ENCODE measurements at regions of chr11 and their contacts with region 1.

Region 1: GRCh38 chr11:20127671-20128527 is 32.4 kb downstream of the DBX1 start:
- DNase-seq: peak; percentile 52
- ATAC-seq: peak; percentile 90
- H3K4me3 ChIP-seq: no peak overlapping the region
- H3K27ac ChIP-seq: no peak overlapping the region
- H3K4me1 ChIP-seq: peaks cover 16% of the 10 kb centered on the region; the same call in 1 of the 2 replicates
- H3K27me3 ChIP-seq: peaks cover 0 to 19% of the 10 kb centered on the region in 2 experiments; a peak in 2 of 5 replicates
- CTCF ChIP-seq: peak; percentile 92
- EP300 ChIP-seq: no peak
- POLR2A ChIP-seq: no peak
- RAD21 ChIP-seq: peak; percentile 66

Region 2: DNA sequence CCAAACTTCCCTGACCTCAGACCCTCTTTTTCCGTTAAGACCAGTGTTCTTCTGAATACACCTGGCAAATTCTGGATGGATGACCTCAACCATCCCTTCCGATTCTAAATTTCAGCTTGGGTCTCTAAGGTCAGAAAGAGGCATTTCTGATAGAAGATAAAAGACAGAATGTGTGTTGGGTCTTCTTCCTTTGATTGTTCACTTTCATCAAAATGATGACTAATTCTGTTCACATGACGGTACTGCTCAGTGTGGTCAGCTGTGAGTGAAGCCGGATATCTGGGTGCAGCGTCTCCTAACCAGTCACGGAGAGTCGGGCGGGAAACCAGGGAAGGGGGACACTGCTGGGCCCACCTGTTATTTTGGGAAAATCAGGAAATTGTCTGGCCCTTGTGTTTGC is 566.9 kb before region 1 on chr11:
- CTCF ChIA-PET with region 1: interaction called, 5 read pairs
- POLR2A ChIA-PET with region 1: no interaction called
- in situ Hi-C with region 1: loop called (anchors 5 kb)
- intact Hi-C with region 1: loop called (anchors 5 kb)
- DNase-seq: no peak
- ATAC-seq: no peak
- H3K4me3 ChIP-seq: no peak overlapping the region
- H3K27ac ChIP-seq: no peak overlapping the region
- H3K4me1 ChIP-seq: no peaks in the 10 kb centered on the region
- H3K27me3 ChIP-seq: peaks cover 0 to 28% of the 10 kb centered on the region in 2 experiments; a peak in 3 of 5 replicates
- CTCF ChIP-seq: no peak
- EP300 ChIP-seq: no peak
- POLR2A ChIP-seq: no peak
- RAD21 ChIP-seq: no peak

Region 3: GRCh38 chr11:20080032-20080685 is 47.7 kb before region 1 on chr11:
- CTCF ChIA-PET with region 1: no interaction called
- POLR2A ChIA-PET with region 1: no interaction called
- in situ Hi-C with region 1: no loop called
- intact Hi-C with region 1: no loop called
- DNase-seq: no peak
- ATAC-seq: no peak
- H3K4me3 ChIP-seq: no peak overlapping the region
- H3K27ac ChIP-seq: no peak overlapping the region
- H3K4me1 ChIP-seq: peaks cover 19% of the 10 kb centered on the region
- H3K27me3 ChIP-seq: no peaks in the 10 kb centered on the region
- CTCF ChIP-seq: no peak
- EP300 ChIP-seq: no peak
- POLR2A ChIP-seq: no peak
- RAD21 ChIP-seq: no peak

Region 4: DNA sequence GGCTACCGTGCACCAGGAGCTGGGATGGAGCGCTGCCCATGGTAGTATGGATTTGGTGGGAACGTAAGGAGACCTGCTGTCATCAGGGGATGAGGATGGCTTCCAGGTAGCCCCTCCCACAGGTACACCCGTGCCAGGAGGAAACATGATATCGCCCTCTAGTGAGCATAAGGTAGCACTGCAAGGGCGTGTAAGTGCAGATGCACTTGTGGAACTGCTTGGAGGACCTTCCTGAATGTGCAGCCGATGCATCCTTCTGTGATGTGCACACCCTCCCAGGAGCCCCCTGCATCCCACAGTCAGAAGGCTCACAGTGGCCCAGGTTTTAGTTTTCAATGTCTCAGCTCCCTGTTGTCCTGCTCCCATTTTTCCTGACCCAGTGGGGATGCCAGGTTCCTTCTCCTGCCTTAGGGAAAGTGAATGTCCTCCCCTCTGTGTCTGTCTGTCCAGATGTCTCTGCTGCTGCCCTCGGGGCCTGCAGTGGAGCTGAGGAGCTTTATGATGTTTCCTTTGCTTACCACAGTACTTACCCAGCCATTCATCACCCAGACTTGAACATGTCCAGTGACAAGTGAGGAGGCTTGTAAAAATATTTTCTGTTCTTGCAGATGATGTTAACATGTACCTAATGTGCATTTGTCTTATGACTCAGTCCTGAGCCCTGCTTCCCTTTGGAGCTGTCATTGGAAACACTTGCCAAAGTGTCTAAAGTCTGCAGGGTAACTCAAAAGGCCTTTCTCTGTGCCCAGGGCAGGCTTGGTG is 16.8 kb before region 1 on chr11:
- CTCF ChIA-PET with region 1: no interaction called
- POLR2A ChIA-PET with region 1: no interaction called
- in situ Hi-C with region 1: no loop called
- intact Hi-C with region 1: no loop called
- DNase-seq: peak; percentile 70
- ATAC-seq: peak; percentile 85
- H3K4me3 ChIP-seq: no peak overlapping the region
- H3K27ac ChIP-seq: no peak overlapping the region
- H3K4me1 ChIP-seq: no peaks in the 10 kb centered on the region
- H3K27me3 ChIP-seq: no peaks in the 10 kb centered on the region
- CTCF ChIP-seq: peak; percentile 95
- EP300 ChIP-seq: no peak
- POLR2A ChIP-seq: no peak; a peak in 1 of 4 replicates
- RAD21 ChIP-seq: peak; percentile 45; the same call in 1 of the 2 replicates

Region 5: GRCh38 chr11:20337526-20338154 is 209.7 kb after region 1 on chr11:
- CTCF ChIA-PET with region 1: no interaction called
- POLR2A ChIA-PET with region 1: no interaction called
- in situ Hi-C with region 1: no loop called
- intact Hi-C with region 1: loop called (anchors 1 kb)
- DNase-seq: peak; percentile 18
- ATAC-seq: peak; percentile 87
- H3K4me3 ChIP-seq: no peak overlapping the region
- H3K27ac ChIP-seq: no peak overlapping the region
- H3K4me1 ChIP-seq: peaks cover 6% of the 10 kb centered on the region; the same call in 1 of the 2 replicates
- H3K27me3 ChIP-seq: no peaks in the 10 kb centered on the region; a peak in 2 of 5 replicates
- CTCF ChIP-seq: peak; percentile 52
- EP300 ChIP-seq: no peak
- POLR2A ChIP-seq: no peak
- RAD21 ChIP-seq: peak; percentile 28; the same call in 1 of the 2 replicates

Region 6: DNA sequence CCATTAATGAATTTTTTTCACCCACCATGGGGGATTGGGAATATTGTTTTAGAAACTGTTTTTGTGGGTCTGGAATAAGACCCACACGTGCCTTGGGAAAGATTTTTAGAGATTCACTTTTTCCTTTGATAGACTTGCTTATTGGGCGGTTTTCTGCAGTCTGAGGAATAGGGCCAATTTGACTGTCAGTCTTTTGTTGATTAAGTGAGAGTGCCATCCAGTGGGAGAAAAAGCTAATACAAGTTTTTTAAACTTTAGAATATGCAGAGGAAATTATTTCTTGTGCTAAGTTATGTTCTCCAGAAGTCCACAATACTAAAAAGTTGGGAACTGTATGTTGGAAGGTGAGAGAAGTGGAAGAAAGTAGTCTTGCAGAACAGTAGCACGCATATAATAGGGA is 315.7 kb after region 1 on chr11:
- CTCF ChIA-PET with region 1: no interaction called
- POLR2A ChIA-PET with region 1: no interaction called
- in situ Hi-C with region 1: no loop called
- intact Hi-C with region 1: loop called (anchors 10 kb)
- DNase-seq: peak; percentile 5
- ATAC-seq: no peak
- H3K4me3 ChIP-seq: no peak overlapping the region
- H3K27ac ChIP-seq: no peak overlapping the region
- H3K4me1 ChIP-seq: peaks cover 9% of the 10 kb centered on the region; the same call in 1 of the 2 replicates
- H3K27me3 ChIP-seq: no peaks in the 10 kb centered on the region
- CTCF ChIP-seq: 0 out of 2 replicates have a peak, but pooled peaks have one; percentile 14
- EP300 ChIP-seq: no peak
- POLR2A ChIP-seq: no peak
- RAD21 ChIP-seq: no peak

Region 7: GRCh38 chr11:21511835-21512440 is 1384.0 kb after region 1 on chr11:
- CTCF ChIA-PET with region 1: no interaction called
- POLR2A ChIA-PET with region 1: no interaction called
- in situ Hi-C with region 1: no loop called
- intact Hi-C with region 1: loop called (anchors 5 kb)
- DNase-seq: peak; percentile 48
- ATAC-seq: peak; percentile 88
- H3K4me3 ChIP-seq: no peak overlapping the region
- H3K27ac ChIP-seq: no peak overlapping the region
- H3K4me1 ChIP-seq: no peaks in the 10 kb centered on the region
- H3K27me3 ChIP-seq: no peaks in the 10 kb centered on the region
- CTCF ChIP-seq: peak; percentile 75
- EP300 ChIP-seq: no peak
- POLR2A ChIP-seq: no peak
- RAD21 ChIP-seq: no peak

Measured in HepG2 (cell line).